Mammary epithelial cell (primary cell): ENCODE measurements at regions of chr11 and their contacts with region 1.

Region 1: DNA sequence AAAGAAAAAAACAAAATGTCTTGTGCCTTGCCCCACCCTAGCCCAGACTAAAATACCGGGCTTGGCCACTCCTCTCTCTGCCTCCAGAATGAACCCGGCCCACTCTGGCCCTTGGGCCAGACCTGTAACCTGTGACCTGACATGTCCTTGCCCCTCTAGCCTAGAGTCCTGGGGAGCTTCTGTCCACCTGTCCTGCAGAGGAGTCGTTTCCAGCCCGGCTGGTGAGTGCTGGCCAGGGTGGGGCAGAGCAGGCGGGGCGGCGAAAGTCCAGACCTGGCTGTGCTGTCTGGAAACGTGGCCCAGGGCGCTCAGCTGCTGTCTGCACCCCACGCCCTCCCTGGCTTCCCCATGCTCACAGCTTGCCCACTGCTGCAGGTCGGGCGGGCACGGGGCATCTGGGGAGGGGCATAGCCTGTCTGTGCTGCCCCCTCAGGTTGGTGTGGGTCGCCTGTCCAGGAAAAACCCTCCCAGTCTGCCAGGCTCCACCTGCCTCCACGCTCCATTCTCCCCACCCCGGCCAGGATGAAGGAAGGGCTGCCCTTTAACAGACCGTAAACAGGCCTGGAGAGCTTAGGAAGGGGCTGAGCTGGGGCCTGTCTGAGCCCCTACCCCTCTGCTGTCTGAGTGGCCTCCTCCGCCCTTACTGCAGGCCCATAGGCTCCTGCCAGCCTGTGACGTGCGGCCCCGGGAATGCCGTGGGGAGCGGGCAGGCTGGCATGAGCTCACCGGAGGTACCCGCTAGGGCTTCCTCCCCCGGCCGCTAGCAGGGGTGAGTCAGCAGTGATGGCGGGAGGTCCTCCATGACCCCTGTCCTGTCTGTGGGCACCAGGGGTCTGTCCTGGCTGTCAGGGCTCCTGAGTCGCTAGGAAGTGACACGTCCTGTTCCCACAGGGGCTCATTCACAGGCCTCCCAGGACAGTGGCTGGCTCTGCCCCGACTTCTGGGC is 1.9 kb downstream of the CD151 start:
- DNase-seq: peak; percentile 91
- H3K4me3 ChIP-seq: peak overlapping the region; percentile 26 to 79 (median 39)
- H3K27ac ChIP-seq: peak overlapping the region; percentile 92
- H3K4me1 ChIP-seq: peaks cover 76% of the 10 kb centered on the region
- H3K27me3 ChIP-seq: no peaks in the 10 kb centered on the region
- CTCF ChIP-seq: peak in 1 of 2 donors; percentile 1

Region 2: GRCh38 chr11:798093-798713 is 36.4 kb before region 1 on chr11 and contains the start of gene SLC25A22:
- CTCF ChIA-PET with region 1: no interaction called
- dilution Hi-C with region 1: no loop called
- in situ Hi-C with region 1: no loop called
- intact Hi-C with region 1: loop called (anchors 2 kb)
- DNase-seq: peak; percentile 80
- H3K4me3 ChIP-seq: peak within 1 kb of the TSS; percentile 55 to 93 (median 88)
- H3K27ac ChIP-seq: peak within 1 kb of the TSS; percentile 9
- H3K4me1 ChIP-seq: peaks cover 23% of the 10 kb centered on the region
- H3K27me3 ChIP-seq: no peaks in the 10 kb centered on the region
- CTCF ChIP-seq: peak; percentile 42 to 67
- total RNA-seq, gene SLC25A22: 7.3 to 29.5 TPM

Region 3: DNA sequence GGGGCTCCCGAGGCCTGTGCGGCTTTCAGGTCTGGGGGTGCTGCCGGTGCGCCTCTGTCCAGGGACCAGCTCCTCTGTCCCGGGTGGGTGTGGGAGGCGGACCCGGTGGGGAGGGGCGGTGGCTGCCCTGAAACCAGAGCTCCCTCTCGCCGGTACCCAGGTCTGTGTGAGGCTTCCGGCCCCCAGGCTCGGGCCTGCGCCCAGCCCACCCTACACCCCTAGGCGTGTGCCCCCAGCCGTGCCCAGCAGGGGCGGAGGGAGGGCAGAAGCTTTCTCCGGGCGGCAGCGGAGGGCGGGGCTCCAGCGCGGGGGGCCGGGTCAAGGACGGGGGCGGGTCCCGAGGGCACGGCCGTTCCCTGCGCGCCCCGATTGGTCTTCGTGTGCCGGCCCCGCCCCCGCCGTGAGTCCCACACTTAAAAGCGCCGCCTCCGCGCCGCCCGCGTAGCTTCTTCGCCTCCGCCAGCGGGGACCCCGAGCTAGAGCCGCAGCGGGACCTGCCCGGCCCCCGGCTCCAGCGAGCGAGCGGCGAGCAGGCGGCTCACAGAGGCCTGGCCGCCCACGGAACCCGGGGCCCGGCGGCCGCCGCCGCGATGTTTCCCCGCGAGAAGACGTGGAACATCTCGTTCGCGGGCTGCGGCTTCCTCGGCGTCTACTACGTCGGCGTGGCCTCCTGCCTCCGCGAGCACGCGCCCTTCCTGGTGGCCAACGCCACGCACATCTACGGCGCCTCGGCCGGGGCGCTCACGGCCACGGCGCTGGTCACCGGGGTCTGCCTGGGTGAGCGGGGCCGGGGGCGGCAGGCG is 15.3 kb before region 1 on chr11:
- CTCF ChIA-PET with region 1: interaction called, 6 read pairs
- dilution Hi-C with region 1: no loop called
- in situ Hi-C with region 1: no loop called
- intact Hi-C with region 1: loop called (anchors 2 kb)
- DNase-seq: peak; percentile 81
- H3K4me3 ChIP-seq: peak overlapping the region; percentile 68 to 92 (median 77)
- H3K27ac ChIP-seq: peak overlapping the region; percentile 67
- H3K4me1 ChIP-seq: peaks cover 31% of the 10 kb centered on the region
- H3K27me3 ChIP-seq: no peaks in the 10 kb centered on the region
- CTCF ChIP-seq: peak in 1 of 2 donors; percentile 20

Region 4: DNA sequence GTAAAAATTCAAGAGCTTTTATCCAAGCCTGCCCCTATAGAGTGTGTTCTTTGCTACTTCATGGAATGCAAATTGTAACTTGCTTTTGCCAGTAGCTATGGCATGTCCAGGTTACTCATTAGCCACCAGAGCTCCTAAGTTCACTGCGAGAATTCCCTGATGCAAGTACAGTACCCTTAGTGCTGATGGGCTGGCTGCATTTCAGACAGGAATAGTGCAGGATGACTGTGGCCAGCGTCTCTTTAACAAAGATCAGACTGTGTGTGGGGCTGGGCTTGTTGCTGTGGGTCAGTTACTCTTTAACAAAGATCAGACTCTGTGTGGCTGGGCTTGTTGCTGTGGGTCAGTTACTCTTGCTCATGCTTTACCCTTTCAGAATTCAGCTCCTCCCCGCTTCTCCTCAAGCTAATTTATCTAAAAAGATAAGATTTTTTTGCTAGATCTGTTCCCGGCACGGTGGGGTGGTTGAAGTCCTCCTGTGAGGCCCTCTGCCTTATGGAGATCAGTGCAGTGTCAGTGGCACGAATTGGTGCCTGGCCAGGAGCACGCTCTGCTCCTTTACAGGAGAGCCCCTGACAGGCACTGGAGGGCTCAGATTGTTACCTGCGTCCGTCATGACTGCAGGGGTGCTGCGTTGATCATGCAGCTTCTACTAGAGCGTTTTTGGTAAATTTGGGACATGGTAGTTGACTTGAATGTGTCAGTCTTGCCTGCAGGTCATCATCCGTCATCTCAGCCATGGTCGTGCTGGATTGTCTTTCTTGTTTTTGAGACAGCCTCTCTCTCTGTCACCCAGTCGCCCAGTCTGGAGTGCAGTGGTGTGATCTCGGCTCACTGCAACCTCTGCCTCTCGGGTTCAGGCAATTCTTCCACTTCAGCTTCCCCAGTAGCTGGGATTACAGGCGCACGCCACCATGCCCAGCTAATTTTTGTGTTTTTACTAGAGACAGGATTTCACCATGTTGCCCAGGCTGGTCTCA is 118.1 kb after region 1 on chr11:
- CTCF ChIA-PET with region 1: no interaction called
- dilution Hi-C with region 1: no loop called
- in situ Hi-C with region 1: no loop called
- intact Hi-C with region 1: no loop called
- DNase-seq: no peak
- H3K4me3 ChIP-seq: no peak overlapping the region
- H3K27ac ChIP-seq: no peak overlapping the region
- H3K4me1 ChIP-seq: no peaks in the 10 kb centered on the region
- H3K27me3 ChIP-seq: no peaks in the 10 kb centered on the region
- CTCF ChIP-seq: no peak